Mammary epithelial cell (primary cell): ENCODE measurements at regions of chr9 and their contacts with region 1.

Region 1: DNA sequence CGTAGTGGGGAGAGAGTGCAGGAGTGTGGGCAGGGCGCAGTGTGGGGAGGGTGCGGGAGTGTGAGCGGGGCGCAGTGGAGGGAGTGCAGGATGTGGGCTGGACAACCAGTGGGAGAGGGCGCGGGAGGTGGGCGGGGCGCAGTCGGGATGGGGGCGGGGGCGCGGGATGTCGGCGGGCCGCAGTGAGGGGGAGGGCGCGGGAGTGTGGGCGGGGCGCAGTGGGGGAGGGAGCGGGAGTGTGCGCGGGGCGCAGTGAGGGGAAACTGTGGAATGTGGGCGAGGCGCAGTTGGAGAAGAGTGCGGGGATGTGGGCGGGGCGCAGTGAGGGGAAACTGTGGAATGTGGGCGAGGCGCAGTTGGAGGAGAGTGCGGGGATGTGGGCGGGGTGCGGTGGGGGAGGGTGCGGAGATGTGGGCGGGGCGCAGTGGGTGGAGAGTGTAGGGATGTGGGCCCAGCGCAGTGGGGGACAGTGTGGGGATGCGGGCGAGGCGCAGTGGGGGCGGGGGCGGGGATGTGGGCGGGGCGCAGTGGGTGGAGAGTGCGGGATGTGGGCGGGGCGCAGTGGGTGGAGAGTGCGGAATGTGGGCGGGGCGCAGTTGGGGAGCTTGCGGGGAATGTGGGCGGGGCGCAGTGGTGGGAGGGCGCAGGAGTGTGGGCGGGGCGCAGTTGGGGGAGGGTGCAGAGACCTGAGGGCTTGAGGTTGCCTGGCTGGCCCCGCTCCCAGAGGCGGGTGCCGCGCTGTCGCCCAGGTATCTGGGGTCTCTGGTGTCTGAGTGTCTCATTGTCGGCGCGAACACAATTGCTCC is at the start of gene NXNL2:
- DNase-seq: peak; percentile 56
- H3K4me3 ChIP-seq: peak within 1 kb of the TSS; percentile 55 to 70 (median 64)
- H3K27ac ChIP-seq: no peak within 1 kb of the TSS
- H3K4me1 ChIP-seq: peaks cover 20% of the 10 kb centered on the region
- H3K27me3 ChIP-seq: no peaks in the 10 kb centered on the region
- CTCF ChIP-seq: no peak
- total RNA-seq, gene NXNL2: 0.31 to 1.0 TPM

Region 2: GRCh38 chr9:88173378-88173999 is 361.2 kb before region 1 on chr9:
- CTCF ChIA-PET with region 1: no interaction called
- dilution Hi-C with region 1: no loop called
- in situ Hi-C with region 1: no loop called
- intact Hi-C with region 1: loop called (anchors 1 kb)
- DNase-seq: peak; percentile 67
- H3K4me3 ChIP-seq: no peak overlapping the region
- H3K27ac ChIP-seq: no peak overlapping the region
- H3K4me1 ChIP-seq: no peaks in the 10 kb centered on the region
- H3K27me3 ChIP-seq: no peaks in the 10 kb centered on the region
- CTCF ChIP-seq: peak; percentile 80 to 84

Region 3: DNA sequence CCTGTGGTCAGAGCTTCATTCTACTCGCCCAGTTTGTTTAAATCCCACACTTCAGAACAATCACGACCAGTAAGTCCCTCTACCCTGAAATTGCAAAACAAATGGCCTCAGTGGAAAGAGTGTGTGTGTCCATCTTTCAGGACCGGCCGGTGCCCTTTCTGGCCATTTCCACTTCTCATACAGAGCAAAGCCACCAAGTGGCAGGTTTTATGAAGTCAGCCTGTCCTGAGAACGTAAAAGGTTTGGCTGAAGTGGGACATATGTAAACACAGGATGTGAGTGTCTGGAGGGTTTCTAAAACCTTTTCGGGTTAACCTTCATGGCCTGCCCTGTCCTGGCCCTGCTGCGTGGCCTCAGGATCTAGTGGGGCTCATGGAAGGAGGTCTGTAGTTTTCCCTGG is 25.0 kb after region 1 on chr9:
- CTCF ChIA-PET with region 1: interaction called, 11 read pairs
- dilution Hi-C with region 1: no loop called
- in situ Hi-C with region 1: no loop called
- intact Hi-C with region 1: no loop called
- DNase-seq: no peak
- H3K4me3 ChIP-seq: no peak overlapping the region
- H3K27ac ChIP-seq: no peak overlapping the region
- H3K4me1 ChIP-seq: no peaks in the 10 kb centered on the region
- H3K27me3 ChIP-seq: no peaks in the 10 kb centered on the region
- CTCF ChIP-seq: no peak

Region 4: DNA sequence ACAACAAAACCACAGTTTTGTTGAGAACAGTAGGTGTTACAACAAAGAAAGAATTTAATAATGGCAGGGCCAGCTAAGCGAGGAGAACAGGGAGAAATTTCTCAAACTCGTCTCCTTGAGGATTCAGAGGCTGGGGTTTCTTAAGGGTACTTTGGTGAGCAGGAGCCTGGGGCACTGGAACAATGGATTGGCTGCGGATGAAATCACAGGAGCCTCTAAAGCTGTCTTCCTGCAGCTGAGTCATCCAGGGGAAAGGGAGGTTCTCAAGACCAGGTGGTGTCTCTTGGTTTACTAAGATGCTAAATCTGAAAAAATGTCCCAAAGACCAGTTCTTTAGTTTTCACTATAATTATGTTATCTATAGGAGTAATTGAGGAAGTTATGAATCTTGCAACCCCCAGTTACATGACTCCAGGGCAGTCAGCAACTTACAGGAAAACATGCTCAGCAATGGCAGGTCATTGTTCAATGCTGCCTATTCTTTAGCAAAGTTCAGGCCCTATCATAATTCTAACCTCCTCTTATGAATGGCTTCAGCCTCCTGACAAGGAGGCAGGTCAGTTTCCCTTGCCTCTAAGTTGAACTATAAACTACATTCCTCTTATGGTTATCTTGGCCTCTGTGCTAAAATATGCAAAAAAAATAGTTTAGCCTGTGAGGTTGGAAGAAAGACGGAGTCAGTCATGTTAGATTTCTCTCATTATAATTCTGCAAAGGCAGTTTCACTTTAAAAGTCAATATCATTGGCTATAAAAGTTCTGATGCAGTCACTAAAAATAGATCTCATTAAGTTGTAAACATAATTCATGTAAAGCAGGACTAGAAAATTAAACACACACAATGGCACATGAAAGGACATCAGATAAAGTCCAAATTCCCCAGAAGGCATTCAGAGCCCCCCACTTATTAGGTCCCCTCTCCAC is 713.0 kb after region 1 on chr9:
- CTCF ChIA-PET with region 1: no interaction called
- dilution Hi-C with region 1: no loop called
- in situ Hi-C with region 1: no loop called
- intact Hi-C with region 1: no loop called
- DNase-seq: peak; percentile 35
- H3K4me3 ChIP-seq: no peak overlapping the region
- H3K27ac ChIP-seq: no peak overlapping the region
- H3K4me1 ChIP-seq: no peaks in the 10 kb centered on the region
- H3K27me3 ChIP-seq: no peaks in the 10 kb centered on the region
- CTCF ChIP-seq: no peak